Endothelial cell of umbilical vein (primary cell): ENCODE measurements at regions of chr12 and their contacts with region 1.

Region 1: DNA sequence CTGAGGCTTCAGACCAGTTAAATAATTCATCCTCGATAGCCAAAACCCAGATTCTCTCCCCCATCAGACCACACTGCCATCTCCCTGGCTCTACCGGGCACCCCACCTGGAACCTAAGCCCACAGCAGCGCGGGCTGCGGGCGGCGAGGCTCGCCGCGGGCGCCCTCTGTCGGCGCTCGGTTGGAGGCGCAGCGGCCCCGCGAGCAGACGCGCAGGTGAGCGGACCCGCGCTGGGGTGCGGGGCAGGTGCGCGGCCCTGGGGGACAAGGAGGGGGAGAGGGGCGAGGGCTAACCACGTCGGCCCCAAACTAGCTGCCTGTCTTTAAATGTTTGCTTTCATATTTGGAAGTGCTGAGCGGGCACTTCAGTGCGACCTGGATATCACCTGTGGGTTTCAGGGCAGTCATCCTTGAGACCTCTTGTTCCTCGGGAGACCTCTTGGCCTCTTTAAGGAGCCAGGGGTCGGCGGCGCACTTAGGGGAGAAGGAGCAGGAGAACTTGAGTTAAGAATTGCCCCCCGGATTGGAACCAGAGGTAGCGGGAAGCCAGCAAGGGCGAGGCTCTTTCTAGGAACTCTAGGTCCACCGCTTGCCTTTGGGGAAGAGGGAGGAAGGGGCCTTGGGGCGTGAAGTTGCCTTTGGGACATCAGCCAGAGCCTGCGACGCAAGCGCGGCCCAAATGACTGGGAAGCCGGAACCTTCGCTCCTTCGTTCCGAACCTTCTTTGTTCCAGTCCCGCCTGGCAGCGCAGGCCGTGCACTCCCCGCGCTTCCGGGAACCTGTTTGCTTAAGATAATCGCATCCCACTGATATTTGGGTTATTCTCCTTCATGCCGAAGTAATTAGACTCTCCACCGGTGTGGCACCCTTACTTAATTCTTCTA is 78.7 kb downstream of the NEDD1 start:
- DNase-seq: peak; percentile 23
- H3K4me3 ChIP-seq: peak overlapping the region; percentile 5 to 41 (median 39)
- H3K27ac ChIP-seq: no peak overlapping the region
- H3K4me1 ChIP-seq: peaks cover 7% of the 10 kb centered on the region
- H3K27me3 ChIP-seq: peaks cover 14 to 33% of the 10 kb centered on the region in 2 experiments
- CTCF ChIP-seq: peak; percentile 80 to 90
- POLR2A ChIP-seq: no peak

Region 2: GRCh38 chr12:96578526-96579125 is 407.1 kb before region 1 on chr12:
- CTCF ChIA-PET with region 1: interaction called, 17 read pairs
- POLR2A ChIA-PET with region 1: no interaction called
- dilution Hi-C with region 1: no loop called
- intact Hi-C with region 1: loop called (anchors 1 kb)
- DNase-seq: peak; percentile 56
- H3K4me3 ChIP-seq: no peak overlapping the region
- H3K27ac ChIP-seq: no peak overlapping the region
- H3K4me1 ChIP-seq: no peaks in the 10 kb centered on the region
- H3K27me3 ChIP-seq: no peaks in the 10 kb centered on the region
- CTCF ChIP-seq: peak; percentile 30 to 39
- POLR2A ChIP-seq: no peak

Region 3: GRCh38 chr12:97022536-97023230 is 37.0 kb after region 1 on chr12:
- CTCF ChIA-PET with region 1: no interaction called
- POLR2A ChIA-PET with region 1: no interaction called
- dilution Hi-C with region 1: no loop called
- intact Hi-C with region 1: no loop called
- DNase-seq: no peak
- H3K4me3 ChIP-seq: no peak overlapping the region
- H3K27ac ChIP-seq: no peak overlapping the region
- H3K4me1 ChIP-seq: no peaks in the 10 kb centered on the region
- H3K27me3 ChIP-seq: peaks cover 0 to 2% of the 10 kb centered on the region in 2 experiments
- CTCF ChIP-seq: no peak
- POLR2A ChIP-seq: no peak

Region 4: GRCh38 chr12:97308576-97309198 is 323.0 kb after region 1 on chr12:
- CTCF ChIA-PET with region 1: interaction called, 49 read pairs
- POLR2A ChIA-PET with region 1: interaction called, 5 read pairs
- dilution Hi-C with region 1: no loop called
- intact Hi-C with region 1: loop called (anchors 1 kb)
- DNase-seq: peak; percentile 77
- H3K4me3 ChIP-seq: no peak overlapping the region
- H3K27ac ChIP-seq: no peak overlapping the region
- H3K4me1 ChIP-seq: no peaks in the 10 kb centered on the region
- H3K27me3 ChIP-seq: peaks cover 0 to 1% of the 10 kb centered on the region in 2 experiments
- CTCF ChIP-seq: peak; percentile 37 to 50
- POLR2A ChIP-seq: no peak

Region 5: GRCh38 chr12:97960754-97961608 is 975.3 kb after region 1 on chr12:
- CTCF ChIA-PET with region 1: interaction called, 13 read pairs
- POLR2A ChIA-PET with region 1: no interaction called
- dilution Hi-C with region 1: no loop called
- intact Hi-C with region 1: loop called (anchors 1 kb)
- DNase-seq: peak; percentile 20
- H3K4me3 ChIP-seq: no peak overlapping the region
- H3K27ac ChIP-seq: no peak overlapping the region
- H3K4me1 ChIP-seq: no peaks in the 10 kb centered on the region
- H3K27me3 ChIP-seq: no peaks in the 10 kb centered on the region
- CTCF ChIP-seq: peak; percentile 63 to 73
- POLR2A ChIP-seq: no peak

Region 6: GRCh38 chr12:98154850-98155249 is 1169.1 kb after region 1 on chr12:
- CTCF ChIA-PET with region 1: interaction called, 28 read pairs
- POLR2A ChIA-PET with region 1: no interaction called
- dilution Hi-C with region 1: no loop called
- intact Hi-C with region 1: loop called (anchors 2 kb)
- DNase-seq: peak; percentile 57
- H3K4me3 ChIP-seq: no peak overlapping the region
- H3K27ac ChIP-seq: no peak overlapping the region
- H3K4me1 ChIP-seq: no peaks in the 10 kb centered on the region
- H3K27me3 ChIP-seq: peaks cover 0 to 7% of the 10 kb centered on the region in 2 experiments
- CTCF ChIP-seq: peak; percentile 34 to 65
- POLR2A ChIP-seq: no peak